Gastrocnemius medialis (tissue), 4 donors: ENCODE measurements at regions of chr2 and their contacts with region 1.

Region 1: GRCh38 chr2:182866461-182867406 is at the start of gene FRZB:
- DNase-seq: peak; percentile 36 to 76
- ATAC-seq: peak; percentile 79 to 84
- H3K4me3 ChIP-seq: peak within 1 kb of the TSS; percentile 52 to 74 (median 61)
- H3K27ac ChIP-seq: peak within 1 kb of the TSS; percentile 49 to 75 (median 69)
- H3K4me1 ChIP-seq: peaks cover 12 to 20% of the 10 kb centered on the region in 2 donors
- H3K27me3 ChIP-seq: peaks cover 0 to 2% (median 0%) of the 10 kb centered on the region in 3 donors
- CTCF ChIP-seq: no peak
- POLR2A ChIP-seq: peak; percentile 33 to 51
- total RNA-seq, gene FRZB: 1.3 to 31.3 (median 4.3) TPM

Region 2: GRCh38 chr2:182728014-182728413 is 138.7 kb before region 1 on chr2:
- in situ Hi-C with region 1: no loop called
- intact Hi-C with region 1: no loop called
- DNase-seq: no peak
- ATAC-seq: no peak
- H3K4me3 ChIP-seq: no peak overlapping the region
- H3K27ac ChIP-seq: no peak overlapping the region
- H3K4me1 ChIP-seq: no peaks in the 10 kb centered on the region
- H3K27me3 ChIP-seq: no peaks in the 10 kb centered on the region
- CTCF ChIP-seq: no peak
- POLR2A ChIP-seq: no peak

Region 3: DNA sequence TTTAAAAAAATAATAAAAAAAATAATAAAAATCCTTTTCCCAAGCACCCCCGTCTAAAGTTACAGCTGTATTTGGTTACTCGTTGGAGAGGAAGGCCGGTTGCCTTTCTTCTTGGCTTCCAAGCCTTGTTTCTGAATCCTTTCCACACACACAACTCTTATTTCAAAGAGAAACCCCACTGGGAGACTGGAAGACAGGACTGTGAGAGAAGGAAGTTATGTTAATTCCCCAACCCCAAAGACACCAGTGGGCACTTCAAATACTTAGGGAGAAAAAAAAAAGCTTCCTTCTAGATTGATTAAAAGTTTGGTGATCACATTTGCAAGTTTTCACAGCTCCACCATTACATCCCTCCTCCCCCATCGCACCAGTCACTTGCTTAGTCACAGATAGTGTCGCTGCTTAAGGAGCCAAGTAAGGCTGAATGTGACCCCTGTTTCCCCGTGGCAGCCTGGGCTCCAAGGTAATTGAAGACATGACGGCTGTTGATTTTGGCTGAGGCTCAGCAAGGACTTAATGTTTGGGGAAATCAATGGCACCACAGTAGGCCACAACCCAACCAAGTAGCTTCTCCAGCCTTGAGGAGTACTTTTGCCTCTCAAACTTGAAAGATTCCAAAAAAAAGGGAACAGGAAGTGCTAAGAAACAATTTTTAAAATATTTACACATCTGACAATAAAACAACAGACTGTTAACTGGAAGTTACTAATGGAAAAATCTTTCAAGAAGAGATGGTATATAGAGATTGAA is 40.5 kb after region 1 on chr2:
- in situ Hi-C with region 1: no loop called
- intact Hi-C with region 1: loop called (anchors 5 kb)
- DNase-seq: peak; percentile 74 to 93
- ATAC-seq: peak; percentile 91 to 95
- H3K4me3 ChIP-seq: no peak overlapping the region
- H3K27ac ChIP-seq: peak overlapping the region; percentile 67 to 93 (median 84)
- H3K4me1 ChIP-seq: peaks cover 11 to 25% of the 10 kb centered on the region in 2 donors
- H3K27me3 ChIP-seq: no peaks in the 10 kb centered on the region
- CTCF ChIP-seq: no peak
- POLR2A ChIP-seq: no peak